ENCODE measurements at regions of chr3 and their contacts with region 1.

Region 1: DNA sequence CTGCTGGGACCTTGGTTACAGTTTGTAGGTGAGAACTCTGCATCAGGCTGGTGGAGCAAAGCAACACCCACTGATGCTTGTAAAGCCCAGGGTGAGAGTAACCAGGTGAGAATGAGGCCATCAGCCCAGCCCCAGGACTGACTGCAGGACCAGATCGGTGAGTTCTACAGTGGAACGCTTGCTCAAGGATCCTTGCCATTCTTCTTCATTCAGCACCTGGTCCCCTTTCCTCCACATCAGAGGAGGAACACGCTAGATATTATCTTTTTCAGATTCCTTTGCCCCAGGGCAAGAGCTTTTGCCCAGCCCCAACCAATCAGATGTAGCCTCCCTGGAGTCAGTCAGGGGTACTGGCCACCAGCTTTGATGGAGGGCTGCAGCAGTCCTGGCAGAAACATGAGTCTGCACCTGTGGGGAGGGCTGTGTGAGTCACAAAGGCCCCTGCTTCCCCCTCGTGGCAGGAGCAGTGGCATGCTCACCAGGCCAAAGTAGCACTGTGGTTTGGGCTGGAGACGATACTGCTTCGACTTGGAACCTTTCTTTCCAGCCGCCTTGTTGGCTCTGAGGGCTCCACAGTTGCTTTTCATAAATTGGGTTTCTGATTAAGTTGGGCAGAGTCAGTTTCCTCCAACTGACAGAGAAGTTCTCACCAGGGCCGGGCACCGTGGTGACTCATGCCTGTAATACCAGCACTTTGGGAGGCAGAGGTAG is 3.5 kb upstream of the SHISA5 start:
- DNase-seq: peak; percentile 61 to 76
- ATAC-seq: peak; percentile 76 to 85 (median 80)
- H3K4me3 ChIP-seq: no peak overlapping the region
- H3K27ac ChIP-seq: peak overlapping the region; percentile 64
- H3K4me1 ChIP-seq: peaks cover 15% of the 10 kb centered on the region
- H3K27me3 ChIP-seq: no peaks in the 10 kb centered on the region
- CTCF ChIP-seq: peak; percentile 56

Region 2: GRCh38 chr3:48402281-48402732 is 105.2 kb before region 1 on chr3:
- intact Hi-C with region 1: no loop called
- DNase-seq: peak; percentile 89 to 91
- ATAC-seq: peak in 3 of 4 donors; percentile 75 to 85 (median 80)
- H3K4me3 ChIP-seq: no peak overlapping the region
- H3K27ac ChIP-seq: peak overlapping the region; percentile 23
- H3K4me1 ChIP-seq: no peaks in the 10 kb centered on the region
- H3K27me3 ChIP-seq: peaks cover 0 to 5% (median 0%) of the 10 kb centered on the region in 3 donors
- CTCF ChIP-seq: no peak

Region 3: GRCh38 chr3:48465531-48466378 is 41.8 kb before region 1 on chr3:
- intact Hi-C with region 1: loop called (anchors 2 to 5 kb)
- DNase-seq: peak; percentile 97 to 98
- ATAC-seq: peak; percentile 92 to 93 (median 93)
- H3K4me3 ChIP-seq: peak overlapping the region; percentile 77
- H3K27ac ChIP-seq: peak overlapping the region; percentile 99
- H3K4me1 ChIP-seq: peaks cover 34% of the 10 kb centered on the region
- H3K27me3 ChIP-seq: no peaks in the 10 kb centered on the region
- CTCF ChIP-seq: peak; percentile 79

Region 4: DNA sequence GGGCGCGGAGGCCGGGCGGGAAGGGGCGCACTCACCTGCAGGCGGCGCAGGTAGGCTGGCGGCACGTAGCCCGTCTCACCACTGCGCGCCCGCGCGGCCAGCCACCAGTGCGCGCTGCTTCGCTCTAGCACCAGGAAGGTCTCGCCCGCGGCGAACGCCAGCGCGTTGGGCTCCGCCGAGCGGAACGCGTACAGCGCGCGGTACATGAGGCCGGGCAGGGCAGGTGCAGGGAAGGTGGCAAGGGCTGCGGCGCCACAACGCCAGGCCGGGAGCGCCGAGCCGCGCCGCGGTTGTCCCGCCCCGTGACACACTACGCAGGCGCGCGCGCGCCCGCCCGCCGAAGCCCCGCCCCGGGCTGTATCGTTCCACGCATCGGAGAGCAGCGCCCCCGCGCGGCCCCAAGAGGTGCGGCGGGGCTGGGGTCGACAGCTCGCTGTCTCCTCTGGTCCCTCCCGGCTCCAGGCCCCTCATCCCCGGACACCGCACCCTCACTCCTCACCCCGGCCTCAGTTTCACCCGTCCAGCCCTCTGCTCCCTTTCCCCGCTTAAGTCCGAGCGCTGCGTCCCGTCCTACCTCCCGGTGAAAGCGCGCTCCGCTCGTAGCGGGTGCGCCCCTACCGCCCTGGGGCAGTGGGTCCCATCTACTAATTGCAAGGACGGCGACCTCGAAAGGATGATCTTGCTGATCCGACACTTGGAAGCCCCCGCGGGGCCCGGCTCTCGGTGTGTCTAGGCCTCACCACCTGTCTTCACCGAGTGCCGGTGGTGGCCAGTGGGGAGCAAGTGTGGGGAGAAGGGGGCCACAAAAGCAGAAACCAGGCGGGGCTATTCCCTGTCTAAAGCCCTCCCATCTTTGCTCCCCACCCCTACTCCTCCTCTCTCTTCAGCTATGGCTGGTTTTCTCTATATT is 178.4 kb after region 1 on chr3 and contains the start of gene NCKIPSD:
- intact Hi-C with region 1: no loop called
- DNase-seq: peak; percentile 91 to 95
- ATAC-seq: peak; percentile 95 to 97 (median 97)
- H3K4me3 ChIP-seq: peak within 1 kb of the TSS; percentile 96
- H3K27ac ChIP-seq: peak within 1 kb of the TSS; percentile 86
- H3K4me1 ChIP-seq: peaks cover 26% of the 10 kb centered on the region
- H3K27me3 ChIP-seq: no peaks in the 10 kb centered on the region
- CTCF ChIP-seq: peak; percentile 84
- total RNA-seq, gene NCKIPSD: 5.9 to 8.6 (median 7.5) TPM